Activated naive CD4-positive, alpha-beta T cell treated with anti-CD3 and anti-CD28 coated beads for 36 hours (primary cell): ENCODE measurements at regions of chr6 and their contacts with region 1.

Region 1: GRCh38 chr6:79672631-79673111 is 41.5 kb downstream of the SH3BGRL2 start:
- DNase-seq: no peak
- H3K4me3 Mint-ChIP-seq: no peak overlapping the region
- H3K27ac Mint-ChIP-seq: peak overlapping the region; percentile 43
- H3K4me1 Mint-ChIP-seq: peaks cover 32% of the 10 kb centered on the region
- H3K27me3 Mint-ChIP-seq: no peaks in the 10 kb centered on the region

Region 2: DNA sequence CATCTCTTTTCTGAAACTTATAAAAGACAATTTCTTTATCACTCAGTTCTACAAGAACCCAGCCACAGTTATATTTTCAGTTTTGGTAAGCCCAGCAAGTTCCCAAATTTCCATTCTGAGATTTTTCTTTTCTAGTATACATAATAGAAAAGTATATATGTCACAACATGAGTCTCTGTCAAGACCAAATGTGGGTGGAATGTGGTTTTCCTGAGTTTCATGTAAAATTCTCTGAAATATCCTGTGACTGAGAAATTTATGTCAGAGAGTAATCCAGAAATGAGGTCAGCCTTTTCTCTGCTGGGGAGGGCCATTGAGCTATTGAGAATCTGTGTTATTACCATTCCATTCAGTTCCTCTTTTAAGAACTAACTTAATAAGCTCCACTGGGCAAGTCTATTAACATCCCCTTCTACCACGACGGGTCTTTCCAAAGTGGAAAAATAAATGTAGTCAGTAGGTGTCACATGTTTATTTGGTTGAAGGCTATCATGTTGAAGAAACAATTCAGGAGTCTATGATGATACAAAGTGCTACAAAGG is 337.5 kb before region 1 on chr6:
- CTCF ChIA-PET with region 1: no interaction called
- intact Hi-C with region 1: loop called (anchors 5 kb)
- DNase-seq: no peak
- H3K4me3 Mint-ChIP-seq: no peak overlapping the region
- H3K27ac Mint-ChIP-seq: no peak overlapping the region
- H3K4me1 Mint-ChIP-seq: peaks cover 6% of the 10 kb centered on the region
- H3K27me3 Mint-ChIP-seq: peaks cover 11% of the 10 kb centered on the region

Region 3: DNA sequence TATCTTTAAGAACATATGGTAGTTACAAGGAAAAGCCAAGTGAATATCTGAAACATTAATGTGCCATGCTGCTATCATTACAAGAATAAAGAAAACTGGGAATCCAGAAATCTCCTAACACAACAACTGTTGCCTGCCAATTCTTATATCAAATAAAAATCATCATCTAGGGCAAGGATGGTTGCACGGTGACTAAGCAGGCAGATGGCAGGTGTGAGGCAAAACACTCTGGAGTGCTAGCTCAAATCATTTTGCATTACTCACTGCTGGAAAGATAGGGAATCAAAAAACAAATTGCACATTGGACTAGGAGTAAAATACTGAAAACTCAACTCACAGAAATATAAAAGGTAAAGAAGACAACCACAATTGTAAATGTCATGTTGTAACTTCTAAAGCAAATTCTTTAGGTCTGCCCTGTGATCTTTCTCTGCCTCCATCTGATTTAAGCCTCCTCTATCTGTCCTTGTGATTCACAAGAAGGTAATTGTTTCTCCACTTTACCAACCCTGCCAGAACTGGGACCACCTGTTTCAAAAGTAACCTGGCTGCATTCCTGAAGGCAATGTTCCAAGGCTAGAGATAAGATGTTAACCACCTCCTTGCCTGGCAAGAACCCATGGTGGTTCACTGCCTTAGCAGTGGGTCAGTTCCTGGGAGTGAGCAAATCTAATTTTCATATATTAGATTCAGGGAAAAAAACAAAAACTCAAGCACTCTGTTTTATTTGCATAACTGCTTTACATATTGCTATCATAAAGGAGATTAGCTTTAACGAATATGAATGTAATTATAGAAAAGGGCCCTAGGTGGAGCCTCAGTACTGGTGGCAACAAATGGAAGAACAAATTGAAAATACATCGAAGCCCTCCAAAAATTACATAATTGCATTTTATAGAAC is 102.3 kb before region 1 on chr6:
- CTCF ChIA-PET with region 1: interaction called, 19 read pairs
- intact Hi-C with region 1: loop called (anchors 1 kb)
- DNase-seq: no peak
- H3K4me3 Mint-ChIP-seq: no peak overlapping the region
- H3K27ac Mint-ChIP-seq: no peak overlapping the region
- H3K4me1 Mint-ChIP-seq: no peaks in the 10 kb centered on the region
- H3K27me3 Mint-ChIP-seq: no peaks in the 10 kb centered on the region

Region 4: DNA sequence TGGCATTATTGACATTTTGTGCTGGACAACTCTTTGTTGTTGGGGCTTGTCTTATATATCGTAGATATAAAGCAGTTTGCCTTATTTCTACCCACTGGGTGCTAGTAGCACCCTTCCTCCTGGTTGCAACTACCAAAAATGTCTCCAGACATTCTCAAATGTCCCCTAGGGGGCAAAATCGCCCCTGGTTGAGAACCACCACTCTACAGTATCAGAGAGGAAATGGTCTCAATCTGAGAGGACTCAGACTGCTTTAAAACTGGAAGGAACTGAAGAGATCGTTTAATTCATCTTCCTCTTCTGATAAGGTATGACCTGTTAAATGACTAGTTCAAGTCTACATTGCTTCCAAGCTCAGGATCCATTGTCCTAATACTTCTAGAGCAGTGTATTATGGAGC is 26.7 kb before region 1 on chr6:
- CTCF ChIA-PET with region 1: interaction called, 5 read pairs
- intact Hi-C with region 1: loop called (anchors 1 kb)
- DNase-seq: peak; percentile 23
- H3K4me3 Mint-ChIP-seq: no peak overlapping the region
- H3K27ac Mint-ChIP-seq: no peak overlapping the region
- H3K4me1 Mint-ChIP-seq: peaks cover 8% of the 10 kb centered on the region
- H3K27me3 Mint-ChIP-seq: peaks cover 13% of the 10 kb centered on the region

Region 5: DNA sequence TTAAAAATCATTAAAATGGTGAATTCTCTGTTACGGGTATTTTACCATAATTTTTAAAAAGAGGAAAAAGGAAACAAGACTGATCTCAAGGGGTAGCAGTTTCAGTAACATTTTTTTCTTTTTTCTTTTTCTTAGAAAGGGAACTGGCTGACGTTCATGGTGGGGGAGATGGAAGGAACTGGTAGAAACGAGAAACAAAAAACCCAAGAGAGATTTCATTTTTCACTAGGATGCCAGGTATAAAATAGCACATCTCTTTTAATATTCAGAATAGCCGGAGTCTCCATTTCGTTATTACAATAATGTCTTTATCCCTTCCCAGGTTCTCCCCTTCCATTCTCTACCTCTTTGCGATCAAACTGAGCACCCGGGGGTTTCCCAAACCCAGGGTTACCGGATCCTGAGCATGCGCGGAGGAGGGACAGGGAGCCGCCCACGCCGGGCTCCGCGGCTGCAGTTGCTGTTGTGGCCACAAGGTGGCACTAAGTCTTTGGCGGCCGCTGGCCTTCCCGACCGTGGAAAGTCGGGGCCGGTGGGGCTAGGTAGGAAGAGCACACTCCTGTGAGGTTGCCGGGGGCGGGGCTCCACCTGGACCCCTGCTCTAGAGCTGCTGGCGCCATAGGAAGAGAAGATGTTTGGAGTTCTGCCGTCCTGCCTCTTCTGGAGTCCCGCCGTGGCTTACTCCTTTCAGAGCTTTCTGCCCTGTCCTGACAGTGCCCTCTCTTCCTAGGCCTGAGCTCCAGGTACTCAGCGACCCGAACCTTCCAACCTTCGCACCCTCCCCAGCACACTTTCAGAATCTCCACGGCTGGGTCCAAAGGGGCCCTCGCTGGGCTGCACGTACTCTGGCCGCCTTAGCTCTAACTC is 105.3 kb after region 1 on chr6:
- CTCF ChIA-PET with region 1: no interaction called
- intact Hi-C with region 1: loop called (anchors 5 kb)
- DNase-seq: peak; percentile 92
- H3K4me3 Mint-ChIP-seq: peak overlapping the region; percentile 64
- H3K27ac Mint-ChIP-seq: peak overlapping the region; percentile 50
- H3K4me1 Mint-ChIP-seq: peaks cover 6% of the 10 kb centered on the region
- H3K27me3 Mint-ChIP-seq: no peaks in the 10 kb centered on the region

Region 6: GRCh38 chr6:80004173-80005072 is 331.8 kb after region 1 on chr6 and contains the start of gene TTK:
- CTCF ChIA-PET with region 1: no interaction called
- intact Hi-C with region 1: loop called (anchors 10 kb)
- DNase-seq: peak; percentile 93
- H3K4me3 Mint-ChIP-seq: peak within 1 kb of the TSS; percentile 95
- H3K27ac Mint-ChIP-seq: peak within 1 kb of the TSS; percentile 89
- H3K4me1 Mint-ChIP-seq: peaks cover 16% of the 10 kb centered on the region
- H3K27me3 Mint-ChIP-seq: peaks cover 1% of the 10 kb centered on the region
- total RNA-seq, gene TTK: 45.9 to 51.1 TPM